ENCODE measurements at regions of chr12 and their contacts with region 1.

Region 1: DNA sequence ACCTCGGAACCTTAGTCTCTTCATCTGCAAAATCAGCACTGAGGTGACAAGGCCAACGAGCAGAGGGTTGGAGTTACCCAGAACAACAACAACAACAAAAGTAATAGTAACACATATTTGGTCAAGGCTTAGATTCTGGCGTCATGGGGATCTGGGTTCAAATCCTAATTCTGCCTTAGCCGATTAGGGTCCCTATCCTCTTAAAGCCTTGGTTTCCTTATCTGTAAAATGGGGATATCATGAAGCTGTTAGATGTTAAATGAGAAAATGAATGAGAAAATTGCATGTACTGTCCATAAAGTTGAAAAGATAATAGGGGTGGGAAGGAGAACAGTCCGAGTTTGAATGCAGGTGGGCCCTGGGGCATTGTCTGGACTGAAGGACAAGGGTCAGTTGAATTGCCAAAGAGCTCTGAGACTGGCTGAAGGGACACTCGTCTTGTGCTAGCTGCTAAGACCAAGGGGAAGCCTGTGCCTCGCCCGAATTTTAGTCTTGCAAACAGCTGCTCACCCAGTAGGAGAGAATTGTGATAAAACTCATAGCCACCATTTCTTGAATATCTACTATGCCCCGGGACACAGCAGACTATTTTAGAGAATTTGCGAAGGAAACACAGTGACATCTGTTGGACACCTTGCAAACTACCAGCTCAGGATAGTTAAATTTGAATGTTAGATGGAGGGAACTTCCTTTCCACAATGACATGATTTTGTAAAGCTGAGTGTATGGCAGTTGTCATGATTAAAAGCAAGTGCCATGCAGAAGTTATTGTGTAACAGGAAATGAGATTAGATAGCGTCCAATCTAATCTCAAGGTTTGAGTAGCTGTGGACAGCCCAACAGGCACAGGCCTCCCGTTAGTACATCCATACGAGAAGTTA is 6.8 kb upstream of the HNF1A start:
- DNase-seq: peak; percentile 41
- ATAC-seq: peak; percentile 97
- H3K4me3 Mint-ChIP-seq: no peak overlapping the region
- H3K27ac Mint-ChIP-seq: no peak overlapping the region
- H3K4me1 Mint-ChIP-seq: no peaks in the 10 kb centered on the region
- H3K27me3 Mint-ChIP-seq: no peaks in the 10 kb centered on the region

Region 2: DNA sequence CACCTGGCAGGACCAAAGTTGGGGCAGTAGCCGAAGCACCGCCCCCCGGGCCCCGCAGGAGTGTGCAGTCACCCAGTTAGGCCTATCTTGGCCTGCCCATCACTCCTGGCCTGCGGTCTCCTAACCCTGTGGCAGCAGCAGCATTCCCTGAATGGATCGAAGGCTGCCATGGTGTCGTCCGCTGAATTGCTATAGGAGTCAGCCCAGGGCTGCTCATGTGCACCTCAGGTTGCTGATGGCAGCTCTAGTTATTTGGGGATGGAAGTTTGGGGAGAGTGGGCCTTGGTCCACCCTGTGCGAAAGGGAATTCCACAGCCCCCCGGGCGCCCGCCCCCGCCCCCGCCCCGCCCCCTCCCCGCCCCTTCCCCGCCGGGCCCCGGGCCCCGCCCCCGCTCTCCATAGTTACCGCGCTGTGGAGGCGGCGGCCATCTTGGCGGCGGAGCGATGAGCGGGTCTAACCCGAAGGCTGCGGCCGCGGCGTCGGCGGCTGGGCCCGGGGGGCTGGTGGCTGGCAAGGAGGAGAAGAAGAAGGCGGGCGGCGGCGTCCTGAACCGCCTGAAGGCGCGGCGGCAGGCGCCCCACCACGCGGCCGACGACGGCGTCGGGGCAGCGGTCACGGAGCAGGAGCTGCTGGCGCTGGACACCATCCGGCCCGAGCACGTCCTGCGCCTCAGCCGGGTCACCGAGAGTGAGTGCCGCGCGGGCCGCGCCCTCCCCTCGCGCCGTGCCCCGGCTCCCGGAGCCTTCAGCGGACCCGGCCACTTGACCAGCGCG is 261.3 kb before region 1 on chr12 and contains the start of gene UNC119B:
- CTCF ChIA-PET with region 1: interaction called, 3 read pairs
- POLR2A ChIA-PET with region 1: no interaction called
- intact Hi-C with region 1: loop called in 1 of 2 experiments (anchors 2 kb)
- DNase-seq: peak; percentile 83
- ATAC-seq: peak; percentile 78
- H3K4me3 Mint-ChIP-seq: peak within 1 kb of the TSS; percentile 86
- H3K27ac Mint-ChIP-seq: peak within 1 kb of the TSS; percentile 82
- H3K4me1 Mint-ChIP-seq: peaks cover 34% of the 10 kb centered on the region
- H3K27me3 Mint-ChIP-seq: no peaks in the 10 kb centered on the region
- total RNA-seq, gene UNC119B: 20.1 to 26.6 TPM

Region 3: DNA sequence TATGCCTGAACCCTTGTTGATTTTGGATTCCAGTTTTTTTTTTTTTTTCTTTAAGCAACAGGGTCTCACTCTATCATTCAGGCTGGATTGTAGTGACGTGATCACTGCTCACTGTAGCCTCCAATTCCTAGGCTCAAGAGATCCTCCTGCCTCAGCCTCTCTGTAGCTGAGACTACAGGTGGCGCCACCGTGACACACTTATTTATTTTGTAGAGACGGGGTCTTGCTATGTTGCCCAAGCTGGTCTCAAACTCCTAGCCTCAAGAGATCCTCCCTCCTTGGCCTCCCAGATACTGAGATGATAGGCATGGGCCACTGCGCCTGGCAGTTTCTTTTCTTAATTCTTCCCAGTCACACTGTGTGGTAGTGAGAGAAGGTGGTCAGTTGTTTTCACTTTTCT is 220.7 kb before region 1 on chr12:
- CTCF ChIA-PET with region 1: interaction called, 3 read pairs
- POLR2A ChIA-PET with region 1: no interaction called
- intact Hi-C with region 1: loop called in 1 of 2 experiments (anchors 5 kb)
- DNase-seq: peak; percentile 38
- ATAC-seq: no peak
- H3K4me3 Mint-ChIP-seq: no peak overlapping the region
- H3K27ac Mint-ChIP-seq: no peak overlapping the region
- H3K4me1 Mint-ChIP-seq: peaks cover 3% of the 10 kb centered on the region
- H3K27me3 Mint-ChIP-seq: no peaks in the 10 kb centered on the region

Region 4: GRCh38 chr12:120856980-120857379 is 114.6 kb before region 1 on chr12:
- CTCF ChIA-PET with region 1: interaction called, 5 read pairs
- POLR2A ChIA-PET with region 1: interaction called, 3 read pairs
- intact Hi-C with region 1: loop called in 1 of 2 experiments (anchors 5 kb)
- DNase-seq: no peak
- ATAC-seq: peak; percentile 59
- H3K4me3 Mint-ChIP-seq: no peak overlapping the region
- H3K27ac Mint-ChIP-seq: peak overlapping the region; percentile 35
- H3K4me1 Mint-ChIP-seq: peaks cover 40% of the 10 kb centered on the region
- H3K27me3 Mint-ChIP-seq: no peaks in the 10 kb centered on the region

Region 5: DNA sequence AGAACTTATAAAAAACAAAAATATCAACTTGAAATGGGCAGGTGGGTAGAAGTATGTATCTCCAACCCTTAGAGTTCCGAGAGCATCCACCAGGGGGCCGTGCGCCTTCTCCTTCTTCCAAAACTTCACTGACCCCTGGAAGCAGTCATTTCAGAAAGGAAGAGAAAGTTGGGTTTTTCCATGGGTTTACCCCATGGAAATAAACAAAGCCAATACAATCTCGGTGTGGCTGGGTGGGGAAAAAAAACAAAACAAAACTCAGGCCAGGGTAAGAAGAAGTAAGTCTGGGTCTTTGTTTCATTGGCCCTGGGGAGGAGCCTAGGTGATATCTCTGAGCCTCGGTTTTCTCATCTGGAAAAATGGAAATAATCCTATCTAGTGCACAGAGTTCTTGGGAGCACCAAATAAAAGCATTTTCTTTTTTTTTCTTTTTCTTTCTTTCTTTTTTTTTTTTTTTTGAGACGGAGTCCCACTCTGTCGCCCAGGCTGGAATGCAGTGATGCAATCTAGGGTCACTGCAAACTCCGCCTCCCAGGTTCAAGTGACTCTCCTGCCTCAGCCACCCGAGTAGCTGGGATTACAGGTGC is 26.8 kb before region 1 on chr12:
- CTCF ChIA-PET with region 1: interaction called, 30 read pairs
- POLR2A ChIA-PET with region 1: no interaction called
- intact Hi-C with region 1: loop called (anchors 1 kb)
- DNase-seq: peak; percentile 86
- ATAC-seq: peak; percentile 91
- H3K4me3 Mint-ChIP-seq: no peak overlapping the region
- H3K27ac Mint-ChIP-seq: no peak overlapping the region
- H3K4me1 Mint-ChIP-seq: peaks cover 8% of the 10 kb centered on the region
- H3K27me3 Mint-ChIP-seq: no peaks in the 10 kb centered on the region